ENCODE measurements at regions of chr1 and their contacts with region 1.

Region 1: GRCh38 chr1:178542560-178543356 is 29.8 kb downstream of the TEX35 start:
- DNase-seq: peak; percentile 94
- H3K4me3 Mint-ChIP-seq: peak overlapping the region; percentile 85
- H3K27ac Mint-ChIP-seq: peak overlapping the region; percentile 79
- H3K4me1 Mint-ChIP-seq: peaks cover 6% of the 10 kb centered on the region
- H3K27me3 Mint-ChIP-seq: no peaks in the 10 kb centered on the region

Region 2: DNA sequence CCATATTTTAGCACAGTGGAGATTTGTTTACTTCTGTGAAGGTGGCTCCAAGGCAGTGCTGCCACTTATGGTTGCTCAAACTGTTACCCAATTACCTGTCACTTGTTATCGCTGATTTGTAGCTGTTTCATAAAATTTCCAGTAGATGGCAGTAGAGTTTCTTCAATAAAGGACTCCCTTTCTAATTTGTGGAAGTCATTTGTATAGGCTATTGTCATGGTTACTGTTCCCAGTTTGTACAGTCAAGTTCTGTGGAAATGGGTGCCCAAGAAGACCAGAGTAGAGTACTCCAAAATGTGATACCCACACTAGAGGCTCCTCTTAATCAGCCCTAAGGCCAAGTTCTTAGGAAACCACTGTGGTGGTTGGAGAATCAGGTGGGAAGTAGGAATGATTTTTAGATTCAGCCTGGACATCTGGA is 232.1 kb before region 1 on chr1:
- CTCF ChIA-PET with region 1: no interaction called
- POLR2A ChIA-PET with region 1: no interaction called
- intact Hi-C with region 1: loop called (anchors 10 kb)
- DNase-seq: no peak
- H3K4me3 Mint-ChIP-seq: no peak overlapping the region
- H3K27ac Mint-ChIP-seq: no peak overlapping the region
- H3K4me1 Mint-ChIP-seq: no peaks in the 10 kb centered on the region
- H3K27me3 Mint-ChIP-seq: peaks cover 1% of the 10 kb centered on the region

Region 3: GRCh38 chr1:178461676-178462075 is 81.1 kb before region 1 on chr1:
- CTCF ChIA-PET with region 1: no interaction called
- POLR2A ChIA-PET with region 1: no interaction called
- intact Hi-C with region 1: no loop called
- DNase-seq: no peak
- H3K4me3 Mint-ChIP-seq: no peak overlapping the region
- H3K27ac Mint-ChIP-seq: no peak overlapping the region
- H3K4me1 Mint-ChIP-seq: no peaks in the 10 kb centered on the region
- H3K27me3 Mint-ChIP-seq: no peaks in the 10 kb centered on the region

Region 4: GRCh38 chr1:178532392-178532791 is 10.4 kb before region 1 on chr1:
- CTCF ChIA-PET with region 1: interaction called, 43 read pairs
- POLR2A ChIA-PET with region 1: no interaction called
- intact Hi-C with region 1: no loop called
- DNase-seq: peak; percentile 83
- H3K4me3 Mint-ChIP-seq: no peak overlapping the region
- H3K27ac Mint-ChIP-seq: no peak overlapping the region
- H3K4me1 Mint-ChIP-seq: no peaks in the 10 kb centered on the region
- H3K27me3 Mint-ChIP-seq: no peaks in the 10 kb centered on the region

Region 5: DNA sequence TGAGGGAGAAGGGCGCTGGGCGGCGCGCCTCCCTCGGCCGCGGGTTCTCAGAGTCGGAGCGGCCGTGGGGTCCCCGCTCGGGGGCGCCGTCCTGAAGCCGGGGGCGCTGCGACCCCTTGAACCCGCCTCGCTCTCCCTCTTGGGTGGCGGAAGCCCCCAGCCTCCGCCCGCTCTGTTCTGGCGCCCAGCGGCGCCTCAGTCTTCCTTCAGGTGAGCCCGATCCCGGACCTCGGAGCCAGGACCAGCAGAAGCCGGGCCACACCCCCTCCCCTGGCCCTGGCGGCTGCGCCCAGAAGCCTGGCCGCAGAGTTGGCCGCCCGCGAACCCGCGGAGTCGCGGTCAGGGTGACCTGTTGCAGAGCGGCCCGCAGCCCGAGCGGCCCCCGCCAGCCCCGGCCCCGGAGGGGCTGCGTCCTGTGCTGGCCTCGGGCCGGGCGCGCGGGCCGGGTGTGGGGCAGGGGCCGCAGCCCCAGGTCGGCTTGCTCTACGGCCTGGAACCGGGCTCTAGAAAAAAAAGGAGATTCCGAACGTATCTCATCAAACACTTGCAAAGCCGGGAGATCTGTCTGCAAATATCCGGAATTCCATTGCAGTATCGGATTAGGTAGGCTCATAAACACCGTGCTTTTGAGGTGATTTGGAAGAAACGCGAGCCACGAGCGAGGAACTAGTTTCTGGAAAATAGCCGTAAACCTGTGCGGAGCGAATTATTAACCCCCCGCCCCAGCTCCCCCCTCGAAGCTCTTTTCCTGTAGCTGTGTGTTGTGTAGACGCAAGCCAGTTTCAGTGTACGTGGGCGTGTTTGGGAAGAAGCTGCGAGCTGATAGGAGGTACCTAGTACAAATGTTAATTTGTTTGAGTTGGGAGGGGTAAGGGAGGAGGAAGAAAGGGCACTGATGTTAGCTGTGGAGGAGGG is 183.1 kb after region 1 on chr1:
- CTCF ChIA-PET with region 1: no interaction called
- POLR2A ChIA-PET with region 1: no interaction called
- intact Hi-C with region 1: loop called (anchors 2 kb)
- DNase-seq: peak; percentile 67
- H3K4me3 Mint-ChIP-seq: peak overlapping the region; percentile 78
- H3K27ac Mint-ChIP-seq: no peak overlapping the region
- H3K4me1 Mint-ChIP-seq: peaks cover 18% of the 10 kb centered on the region
- H3K27me3 Mint-ChIP-seq: peaks cover 14% of the 10 kb centered on the region

Region 6: GRCh38 chr1:178749581-178750166 is 206.9 kb after region 1 on chr1:
- CTCF ChIA-PET with region 1: interaction called, 25 read pairs
- POLR2A ChIA-PET with region 1: no interaction called
- intact Hi-C with region 1: loop called (anchors 1 kb)
- DNase-seq: no peak
- H3K4me3 Mint-ChIP-seq: no peak overlapping the region
- H3K27ac Mint-ChIP-seq: no peak overlapping the region
- H3K4me1 Mint-ChIP-seq: no peaks in the 10 kb centered on the region
- H3K27me3 Mint-ChIP-seq: no peaks in the 10 kb centered on the region

Measured in activated CD4-positive, alpha-beta memory T cell treated with anti-CD3 and anti-CD28 coated beads for 36 hours (primary cell).